ENCODE measurements at regions of chr5 and their contacts with region 1.

Region 1: DNA sequence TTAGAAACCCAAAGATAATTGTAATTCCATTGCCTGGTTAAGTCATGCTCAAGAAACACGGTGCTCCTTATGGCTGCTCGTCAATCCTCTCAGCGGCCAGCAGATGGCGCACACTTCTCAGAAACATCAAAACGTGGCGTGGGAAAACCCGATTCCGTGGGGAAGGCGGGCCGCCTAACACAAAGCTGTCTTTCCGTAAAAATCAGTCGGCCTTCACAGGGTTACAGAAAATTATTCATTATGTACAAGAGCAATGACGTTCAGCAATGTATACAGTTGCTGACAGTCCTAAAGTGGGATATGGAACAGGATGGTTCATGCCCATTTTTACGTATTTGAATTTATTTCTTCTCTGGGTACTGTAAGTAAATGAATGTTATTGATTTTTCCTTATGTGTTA is 83.5 kb downstream of the PDE4D start:
- DNase-seq: peak; percentile 59
- CTCF ChIP-seq: peak; percentile 87

Region 2: GRCh38 chr5:60161340-60161934 is 351.4 kb after region 1 on chr5:
- in situ Hi-C with region 1: loop called (anchors 25 kb)
- DNase-seq: peak; percentile 34
- CTCF ChIP-seq: peak; percentile 56

Region 3: DNA sequence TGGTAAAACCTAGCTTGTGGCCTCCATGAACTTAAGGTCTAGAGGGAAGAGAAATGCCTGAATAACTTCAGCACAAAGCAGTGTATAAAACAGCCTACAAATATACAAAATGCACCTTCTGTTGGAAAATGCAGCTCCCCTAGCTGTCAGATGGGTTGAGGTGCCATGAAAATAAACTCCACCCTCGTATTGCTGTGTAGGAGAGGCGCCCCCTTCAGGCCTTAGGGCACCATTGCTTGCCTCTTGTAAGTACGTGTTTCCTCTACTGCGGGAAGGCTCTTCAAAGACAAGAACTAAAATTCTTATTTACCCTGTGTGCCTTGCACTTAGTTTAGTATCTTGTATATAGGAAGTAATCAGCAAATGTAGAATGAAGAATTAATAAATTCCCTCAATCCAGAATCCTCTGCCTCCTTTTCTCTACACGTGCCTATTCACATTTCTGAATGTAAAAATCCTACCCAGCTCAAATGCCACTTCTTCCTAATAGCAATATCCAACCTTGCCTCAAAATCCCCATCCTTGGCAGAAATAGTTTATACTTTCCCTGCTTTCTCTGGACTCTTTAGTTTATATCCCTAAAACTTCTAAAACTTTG is 477.2 kb after region 1 on chr5:
- in situ Hi-C with region 1: loop called (anchors 25 kb)
- DNase-seq: peak; percentile 17
- CTCF ChIP-seq: peak; percentile 47

Region 4: DNA sequence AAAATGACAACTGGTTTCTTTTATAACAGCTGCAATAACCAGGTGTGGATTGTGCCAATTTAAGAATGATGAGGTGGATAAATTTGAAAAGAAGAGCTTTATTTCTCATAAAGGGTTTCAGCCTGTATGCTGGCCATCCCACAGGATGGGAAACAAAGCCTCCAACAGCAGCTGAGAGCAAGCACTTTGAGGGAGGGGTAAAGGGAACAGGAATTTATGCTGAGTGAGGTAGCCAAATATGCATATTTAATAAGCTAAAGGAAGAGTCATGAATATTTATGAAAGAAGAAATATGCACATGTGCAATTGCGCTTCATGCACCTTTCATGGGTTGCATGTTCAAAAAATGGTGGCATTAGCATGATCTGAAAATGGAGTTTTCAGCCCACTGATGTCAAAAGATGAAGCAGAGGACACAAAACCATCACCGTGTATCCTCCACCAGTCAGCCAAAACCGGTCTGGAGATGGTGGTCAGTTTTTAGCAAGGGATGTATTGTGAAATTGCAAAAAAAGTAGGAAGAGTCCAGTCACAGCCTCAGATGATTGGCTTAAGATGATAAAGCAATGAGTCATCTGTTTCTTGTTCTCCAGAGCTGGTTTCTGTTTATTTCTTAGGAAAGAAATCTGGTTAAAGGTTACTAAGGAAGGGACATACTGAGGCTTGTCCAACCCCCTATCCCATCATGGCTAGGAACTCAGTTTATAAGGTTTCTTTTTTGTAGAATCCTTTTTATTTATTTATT is 842.0 kb after region 1 on chr5:
- in situ Hi-C with region 1: loop called (anchors 5 kb)
- DNase-seq: no peak
- CTCF ChIP-seq: no peak

Measured in GM13977 (cell line).